B cell (primary cell): ENCODE measurements at regions of chr4 and their contacts with region 1.

Region 1: GRCh38 chr4:83455281-83456129 is at the starts of genes HELQ and MRPS18C:
- DNase-seq: peak; percentile 99
- ATAC-seq: peak; percentile 91
- H3K4me3 ChIP-seq: peak within 1 kb of the TSS; percentile 83 to 96 (median 94)
- H3K4me3 Mint-ChIP-seq: peak within 1 kb of the TSS; percentile 100
- H3K27ac ChIP-seq: peak within 1 kb of the TSS; percentile 95 to 100
- H3K27ac Mint-ChIP-seq: peak within 1 kb of the TSS; percentile 100
- H3K4me1 ChIP-seq: peaks cover 18 to 22% of the 10 kb centered on the region in 2 donors
- H3K4me1 Mint-ChIP-seq: peaks cover 60% of the 10 kb centered on the region
- H3K27me3 ChIP-seq: no peaks in the 10 kb centered on the region
- H3K27me3 Mint-ChIP-seq: no peaks in the 10 kb centered on the region
- CTCF ChIP-seq: peak; percentile 19
- total RNA-seq, gene HELQ: 42.4 and 50.8 TPM in 2 replicates
- total RNA-seq, gene MRPS18C: 44.0 and 45.0 TPM in 2 replicates

Region 2: GRCh38 chr4:82890901-82891706 is 564.4 kb before region 1 on chr4 and contains the start of gene SEC31A:
- CTCF ChIA-PET with region 1: no interaction called
- POLR2A ChIA-PET with region 1: no interaction called
- intact Hi-C with region 1: loop called (anchors 2 kb)
- DNase-seq: peak; percentile 98
- ATAC-seq: peak; percentile 92
- H3K4me3 ChIP-seq: peak within 1 kb of the TSS; percentile 76 to 94 (median 85)
- H3K4me3 Mint-ChIP-seq: peak within 1 kb of the TSS; percentile 92
- H3K27ac ChIP-seq: peak within 1 kb of the TSS; percentile 87 to 93
- H3K27ac Mint-ChIP-seq: peak within 1 kb of the TSS; percentile 97
- H3K4me1 ChIP-seq: peaks cover 17 to 18% of the 10 kb centered on the region in 2 donors
- H3K4me1 Mint-ChIP-seq: peaks cover 35% of the 10 kb centered on the region
- H3K27me3 ChIP-seq: no peaks in the 10 kb centered on the region
- H3K27me3 Mint-ChIP-seq: no peaks in the 10 kb centered on the region
- CTCF ChIP-seq: peak; percentile 2
- total RNA-seq, gene SEC31A: 134 and 141 TPM in 2 replicates

Region 3: GRCh38 chr4:83034630-83035494 is 420.6 kb before region 1 on chr4 and contains the start of gene COPS4:
- CTCF ChIA-PET with region 1: no interaction called
- POLR2A ChIA-PET with region 1: interaction called, 5 read pairs
- intact Hi-C with region 1: loop called (anchors 1 kb)
- DNase-seq: peak; percentile 99
- ATAC-seq: peak; percentile 95
- H3K4me3 ChIP-seq: peak within 1 kb of the TSS; percentile 80 to 94 (median 91)
- H3K4me3 Mint-ChIP-seq: peak within 1 kb of the TSS; percentile 98
- H3K27ac ChIP-seq: peak within 1 kb of the TSS; percentile 84 to 86
- H3K27ac Mint-ChIP-seq: peak within 1 kb of the TSS; percentile 98
- H3K4me1 ChIP-seq: peaks cover 10 to 16% of the 10 kb centered on the region in 2 donors
- H3K4me1 Mint-ChIP-seq: peaks cover 34% of the 10 kb centered on the region
- H3K27me3 ChIP-seq: no peaks in the 10 kb centered on the region
- H3K27me3 Mint-ChIP-seq: no peaks in the 10 kb centered on the region
- CTCF ChIP-seq: peak; percentile 34
- total RNA-seq, gene COPS4: 24.5 and 32.8 TPM in 2 replicates

Region 4: GRCh38 chr4:83334425-83335241 is 120.9 kb before region 1 on chr4 and contains the start of gene HPSE:
- CTCF ChIA-PET with region 1: no interaction called
- POLR2A ChIA-PET with region 1: no interaction called
- intact Hi-C with region 1: loop called (anchors 10 kb)
- DNase-seq: peak; percentile 76
- ATAC-seq: peak; percentile 92
- H3K4me3 ChIP-seq: peak within 1 kb of the TSS; percentile 48 to 85 (median 69)
- H3K4me3 Mint-ChIP-seq: peak within 1 kb of the TSS; percentile 86
- H3K27ac ChIP-seq: no peak within 1 kb of the TSS
- H3K27ac Mint-ChIP-seq: peak within 1 kb of the TSS; percentile 57
- H3K4me1 ChIP-seq: peaks cover 12 to 19% of the 10 kb centered on the region in 2 donors
- H3K4me1 Mint-ChIP-seq: peaks cover 20% of the 10 kb centered on the region
- H3K27me3 ChIP-seq: peaks cover 0 to 6% (median 0%) of the 10 kb centered on the region in 4 experiments
- H3K27me3 Mint-ChIP-seq: peaks cover 7% of the 10 kb centered on the region
- CTCF ChIP-seq: no peak
- total RNA-seq, gene HPSE: 1.3 and 2.6 TPM in 2 replicates

Region 5: DNA sequence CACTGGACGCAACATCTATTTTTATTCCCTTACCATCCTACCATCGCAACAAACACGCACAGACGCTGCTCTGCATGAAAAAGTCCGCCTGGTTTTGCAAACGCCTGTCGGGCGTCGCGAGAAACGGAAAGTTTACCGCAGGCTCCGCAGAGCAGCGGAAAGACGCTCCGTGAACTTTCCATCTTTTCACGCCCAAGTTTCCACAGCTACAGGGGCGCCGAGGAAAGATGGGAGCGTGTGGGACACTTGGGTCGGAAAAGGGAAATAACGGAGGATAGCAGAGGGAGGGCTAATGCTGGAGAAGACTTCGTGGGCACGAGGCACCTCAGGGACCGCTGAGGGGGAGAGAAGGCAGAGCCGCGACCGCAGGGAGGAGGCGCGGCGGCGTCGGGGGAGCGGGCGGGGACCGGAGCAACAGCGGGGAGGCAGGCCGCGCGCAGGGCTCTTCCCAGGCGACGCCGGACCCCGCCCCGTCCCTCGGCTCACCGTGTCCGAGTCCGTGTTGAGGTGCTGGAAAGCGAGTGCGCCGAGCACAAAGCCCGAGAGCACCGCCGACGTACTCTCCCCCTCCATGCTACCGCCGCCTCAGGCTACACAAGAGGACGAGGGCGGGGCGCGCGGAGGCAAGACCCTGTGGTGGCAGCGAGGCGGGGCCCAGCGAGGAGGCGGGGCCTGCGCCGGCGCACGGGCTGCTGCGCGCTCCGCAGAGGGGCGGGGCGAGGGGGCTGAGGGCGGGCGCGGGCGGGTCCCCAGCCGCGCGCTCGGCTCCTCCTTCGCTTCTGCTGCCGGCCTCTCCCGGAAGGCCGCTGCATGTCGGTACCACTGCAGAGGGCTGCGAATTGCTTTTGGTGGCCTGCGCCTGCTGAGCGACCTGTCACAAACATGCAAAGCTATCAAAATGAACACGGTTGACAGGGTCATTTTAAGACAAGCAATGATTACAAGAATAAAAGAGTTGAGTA is 29.3 kb after region 1 on chr4 and contains the start of gene ABRAXAS1:
- CTCF ChIA-PET with region 1: interaction called, 5 read pairs
- POLR2A ChIA-PET with region 1: interaction called, 4 read pairs
- intact Hi-C with region 1: loop called (anchors 1 kb)
- DNase-seq: peak; percentile 97
- ATAC-seq: peak; percentile 97
- H3K4me3 ChIP-seq: peak within 1 kb of the TSS; percentile 71 to 87 (median 77)
- H3K4me3 Mint-ChIP-seq: peak within 1 kb of the TSS; percentile 99
- H3K27ac ChIP-seq: peak within 1 kb of the TSS; percentile 60 to 70
- H3K27ac Mint-ChIP-seq: peak within 1 kb of the TSS; percentile 95
- H3K4me1 ChIP-seq: peaks cover 10 to 17% of the 10 kb centered on the region in 2 donors
- H3K4me1 Mint-ChIP-seq: peaks cover 21% of the 10 kb centered on the region
- H3K27me3 ChIP-seq: no peaks in the 10 kb centered on the region
- H3K27me3 Mint-ChIP-seq: no peaks in the 10 kb centered on the region
- CTCF ChIP-seq: no peak
- total RNA-seq, gene ABRAXAS1: 34.4 and 38.4 TPM in 2 replicates

Region 6: DNA sequence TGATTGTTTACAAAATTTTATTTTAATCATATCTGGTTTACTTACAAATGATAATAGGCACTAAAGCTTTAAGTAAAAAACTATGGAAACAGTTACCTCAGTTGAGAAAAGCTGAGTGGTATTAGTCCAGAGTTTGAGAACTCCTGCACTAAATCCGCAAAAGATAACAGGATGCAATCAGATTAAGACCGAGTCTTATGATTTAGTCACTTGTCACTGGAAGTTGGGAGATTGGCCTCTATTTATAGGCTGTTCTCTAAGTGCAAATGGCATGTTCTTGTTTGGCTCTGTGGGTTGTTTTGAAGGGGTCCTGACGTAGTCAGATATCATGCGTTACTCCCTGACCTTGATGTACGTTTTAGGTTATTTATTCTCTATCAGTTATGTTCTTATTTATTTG is 86.7 kb after region 1 on chr4:
- CTCF ChIA-PET with region 1: no interaction called
- POLR2A ChIA-PET with region 1: no interaction called
- intact Hi-C with region 1: no loop called
- DNase-seq: no peak
- ATAC-seq: no peak
- H3K4me3 ChIP-seq: no peak overlapping the region
- H3K4me3 Mint-ChIP-seq: no peak overlapping the region
- H3K27ac ChIP-seq: no peak overlapping the region
- H3K27ac Mint-ChIP-seq: no peak overlapping the region
- H3K4me1 ChIP-seq: no peaks in the 10 kb centered on the region
- H3K4me1 Mint-ChIP-seq: no peaks in the 10 kb centered on the region
- H3K27me3 ChIP-seq: peaks cover 0 to 3% (median 0%) of the 10 kb centered on the region in 4 experiments
- H3K27me3 Mint-ChIP-seq: peaks cover 1% of the 10 kb centered on the region
- CTCF ChIP-seq: no peak